WTC11 (cell line): ENCODE measurements at regions of chr19 and their contacts with region 1.

Region 1: GRCh38 chr19:45485305-45486077 is 11.4 kb downstream of the RTN2 start:
- DNase-seq: peak; percentile 100
- ATAC-seq: peak; percentile 96
- H3K4me3 Mint-ChIP-seq: peak overlapping the region; percentile 81
- H3K27ac Mint-ChIP-seq: peak overlapping the region; percentile 61; the same call in 1 of the 2 replicates
- H3K4me1 Mint-ChIP-seq: peaks cover 4% of the 10 kb centered on the region
- H3K27me3 Mint-ChIP-seq: peaks cover 5% of the 10 kb centered on the region; the same call in 1 of the 2 replicates
- CTCF ChIP-seq: peak; percentile 90

Region 2: GRCh38 chr19:45400192-45400591 is 85.3 kb before region 1 on chr19:
- CTCF ChIA-PET with region 1: interaction called, 67 read pairs
- POLR2A ChIA-PET with region 1: no interaction called
- DNase-seq: no peak
- ATAC-seq: no peak
- H3K4me3 Mint-ChIP-seq: no peak overlapping the region
- H3K27ac Mint-ChIP-seq: no peak overlapping the region
- H3K4me1 Mint-ChIP-seq: peaks cover 32% of the 10 kb centered on the region
- H3K27me3 Mint-ChIP-seq: peaks cover 42% of the 10 kb centered on the region
- CTCF ChIP-seq: no peak

Region 3: DNA sequence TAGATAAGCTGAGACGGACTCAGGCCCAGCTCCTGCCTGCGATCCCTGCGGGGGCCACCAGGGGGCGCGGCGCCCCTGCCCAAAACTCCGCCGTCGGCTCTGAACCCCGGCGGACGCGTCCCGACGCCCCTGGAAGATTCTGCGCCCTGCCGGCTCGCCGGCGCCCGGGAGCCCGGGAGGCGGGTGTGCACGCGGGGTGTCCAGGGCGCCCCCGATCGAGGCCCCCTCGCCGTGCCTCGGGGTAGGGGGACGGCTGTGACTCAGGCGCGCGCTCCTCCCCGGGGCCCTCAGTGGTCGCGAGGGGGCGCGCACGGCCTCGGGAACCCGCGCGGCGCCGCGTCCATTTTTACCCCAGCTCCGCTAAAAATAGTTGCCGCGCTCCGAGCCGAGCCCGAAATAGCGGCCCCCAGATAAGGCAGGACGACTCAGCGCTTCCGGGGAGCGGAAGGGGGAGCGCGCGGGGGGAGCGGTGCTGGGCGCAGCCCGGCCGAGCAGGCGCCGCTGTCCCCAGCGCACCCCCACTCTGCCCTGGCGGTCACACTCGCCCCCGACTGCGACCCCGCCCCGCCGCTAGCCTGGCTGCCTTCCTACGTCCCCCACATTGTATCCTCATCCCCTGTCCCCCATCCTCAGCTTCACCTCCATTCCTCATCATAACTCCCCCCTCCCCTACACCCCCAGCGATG is 45.8 kb before region 1 on chr19:
- CTCF ChIA-PET with region 1: interaction called, 325 read pairs
- POLR2A ChIA-PET with region 1: interaction called, 7 read pairs
- DNase-seq: peak; percentile 79
- ATAC-seq: peak; percentile 7
- H3K4me3 Mint-ChIP-seq: peak overlapping the region; percentile 69
- H3K27ac Mint-ChIP-seq: no peak overlapping the region
- H3K4me1 Mint-ChIP-seq: peaks cover 26% of the 10 kb centered on the region
- H3K27me3 Mint-ChIP-seq: peaks cover 27% of the 10 kb centered on the region
- CTCF ChIP-seq: peak; percentile 100

Region 4: GRCh38 chr19:45469132-45469944 is 16.2 kb before region 1 on chr19:
- CTCF ChIA-PET with region 1: interaction called, 101 read pairs
- POLR2A ChIA-PET with region 1: interaction called, 4 read pairs
- DNase-seq: peak; percentile 94
- ATAC-seq: peak; percentile 75
- H3K4me3 Mint-ChIP-seq: peak overlapping the region; percentile 87
- H3K27ac Mint-ChIP-seq: peak overlapping the region; percentile 96
- H3K4me1 Mint-ChIP-seq: peaks cover 32% of the 10 kb centered on the region
- H3K27me3 Mint-ChIP-seq: peaks cover 81% of the 10 kb centered on the region
- CTCF ChIP-seq: no peak

Region 5: GRCh38 chr19:45526143-45526542 is 40.7 kb after region 1 on chr19:
- CTCF ChIA-PET with region 1: interaction called, 17 read pairs
- POLR2A ChIA-PET with region 1: no interaction called
- DNase-seq: peak; percentile 93
- ATAC-seq: peak; percentile 46
- H3K4me3 Mint-ChIP-seq: no peak overlapping the region
- H3K27ac Mint-ChIP-seq: peak overlapping the region; percentile 96
- H3K4me1 Mint-ChIP-seq: peaks cover 19% of the 10 kb centered on the region
- H3K27me3 Mint-ChIP-seq: peaks cover 21% of the 10 kb centered on the region
- CTCF ChIP-seq: no peak

Region 6: GRCh38 chr19:45569619-45570421 is 84.3 kb after region 1 on chr19:
- CTCF ChIA-PET with region 1: no interaction called
- POLR2A ChIA-PET with region 1: no interaction called
- DNase-seq: peak; percentile 89
- ATAC-seq: peak; percentile 95
- H3K4me3 Mint-ChIP-seq: no peak overlapping the region
- H3K27ac Mint-ChIP-seq: no peak overlapping the region
- H3K4me1 Mint-ChIP-seq: peaks cover 3% of the 10 kb centered on the region
- H3K27me3 Mint-ChIP-seq: no peaks in the 10 kb centered on the region
- CTCF ChIP-seq: peak; percentile 69

Region 7: DNA sequence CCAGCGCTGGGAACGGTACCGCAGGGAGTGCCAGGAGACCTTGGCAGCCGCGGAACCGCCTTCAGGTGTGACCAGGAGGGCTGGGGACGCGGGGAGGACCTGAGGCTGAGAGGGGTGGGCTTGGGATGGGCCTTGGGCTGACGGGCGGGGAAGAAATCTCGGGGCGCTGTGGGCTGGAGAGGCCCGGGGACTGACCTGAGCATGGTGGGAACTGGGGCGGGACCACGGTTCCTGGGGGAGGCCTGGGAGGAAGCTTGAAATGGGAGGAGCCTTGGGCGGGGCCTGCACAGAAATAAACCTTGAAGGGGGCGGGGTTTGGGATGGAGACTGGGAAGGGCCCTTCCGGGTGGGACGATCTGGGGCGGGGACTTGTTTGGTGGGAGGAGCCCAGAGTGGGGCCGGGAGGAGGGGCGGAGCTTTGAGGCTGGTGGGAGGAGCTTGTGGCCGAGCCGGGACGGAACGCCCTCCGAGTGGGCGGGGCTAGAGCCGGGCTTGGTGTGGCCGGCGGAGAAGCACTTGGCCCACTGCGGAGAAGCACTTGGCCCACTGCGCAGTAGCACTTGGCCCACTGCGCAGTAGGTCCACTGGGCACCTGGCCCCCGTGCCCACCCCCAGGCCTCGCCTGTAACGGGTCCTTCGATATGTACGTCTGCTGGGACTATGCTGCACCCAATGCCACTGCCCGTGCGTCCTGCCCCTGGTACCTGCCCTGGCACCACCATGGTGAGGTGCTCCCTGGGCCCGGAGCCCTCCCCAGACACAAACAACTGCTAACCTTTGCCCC is 185.4 kb after region 1 on chr19:
- CTCF ChIA-PET with region 1: interaction called, 25 read pairs
- POLR2A ChIA-PET with region 1: no interaction called
- DNase-seq: peak; percentile 98
- ATAC-seq: peak; percentile 90
- H3K4me3 Mint-ChIP-seq: peak overlapping the region; percentile 73
- H3K27ac Mint-ChIP-seq: no peak overlapping the region
- H3K4me1 Mint-ChIP-seq: peaks cover 27% of the 10 kb centered on the region
- H3K27me3 Mint-ChIP-seq: peaks cover 72% of the 10 kb centered on the region
- CTCF ChIP-seq: no peak